Caco-2 (cell line): ENCODE measurements at regions of chr6 and their contacts with region 1.

Region 1: GRCh38 chr6:134111062-134111677 is 58.7 kb upstream of the SLC2A12 start:
- DNase-seq: peak in 1 of 2 experiments; percentile 58
- H3K4me3 ChIP-seq: no peak overlapping the region
- H3K4me3 Mint-ChIP-seq: no peak overlapping the region
- H3K27ac Mint-ChIP-seq: no peak overlapping the region
- H3K4me1 ChIP-seq: peaks cover under 1% of the 10 kb centered on the region; the same call in 1 of the 2 replicates
- H3K4me1 Mint-ChIP-seq: no peaks in the 10 kb centered on the region
- H3K27me3 ChIP-seq: no peaks in the 10 kb centered on the region
- H3K27me3 Mint-ChIP-seq: peaks cover 3% of the 10 kb centered on the region
- CTCF ChIP-seq: peak; percentile 75 to 80

Region 2: DNA sequence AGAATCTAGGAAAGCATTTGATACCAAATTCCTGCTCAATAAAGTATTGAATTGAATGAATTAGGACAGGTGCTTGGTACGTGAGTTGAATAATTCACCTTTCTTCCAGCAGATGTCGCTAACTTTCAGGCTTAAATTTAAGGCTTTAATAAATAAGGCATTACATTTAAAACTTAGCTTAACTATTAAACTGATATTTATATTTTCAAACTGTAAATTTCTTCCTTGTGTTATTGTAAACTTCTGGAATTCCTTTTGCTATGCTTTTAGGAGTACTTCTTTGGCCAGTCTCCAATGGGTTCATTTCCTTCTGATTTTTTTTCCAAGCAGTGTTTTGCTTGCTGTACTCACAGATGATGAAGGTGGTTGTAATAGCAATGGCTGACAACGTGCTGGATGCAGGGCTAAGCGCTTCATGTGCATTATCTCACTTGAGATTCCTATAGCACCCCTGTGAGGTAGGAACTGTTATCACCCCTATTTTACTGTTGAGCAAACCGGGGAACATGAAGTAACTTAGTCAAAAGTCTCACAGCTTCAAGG is 12.6 kb after region 1 on chr6:
- CTCF ChIA-PET with region 1: interaction called, 4 read pairs
- POLR2A ChIA-PET with region 1: no interaction called
- intact Hi-C with region 1: loop called (anchors 2 kb)
- DNase-seq: peak; percentile 70 to 71
- H3K4me3 ChIP-seq: no peak overlapping the region
- H3K4me3 Mint-ChIP-seq: no peak overlapping the region
- H3K27ac Mint-ChIP-seq: no peak overlapping the region
- H3K4me1 ChIP-seq: no peaks in the 10 kb centered on the region
- H3K4me1 Mint-ChIP-seq: no peaks in the 10 kb centered on the region
- H3K27me3 ChIP-seq: no peaks in the 10 kb centered on the region
- H3K27me3 Mint-ChIP-seq: no peaks in the 10 kb centered on the region
- CTCF ChIP-seq: peak; percentile 54 to 58

Region 3: GRCh38 chr6:134938896-134939295 is 827.7 kb after region 1 on chr6:
- CTCF ChIA-PET with region 1: interaction called, 4 read pairs
- POLR2A ChIA-PET with region 1: no interaction called
- intact Hi-C with region 1: loop called (anchors 2 kb)
- DNase-seq: no peak
- H3K4me3 ChIP-seq: no peak overlapping the region
- H3K4me3 Mint-ChIP-seq: no peak overlapping the region
- H3K27ac Mint-ChIP-seq: no peak overlapping the region
- H3K4me1 ChIP-seq: peaks cover 6% of the 10 kb centered on the region; the same call in 1 of the 2 replicates
- H3K4me1 Mint-ChIP-seq: no peaks in the 10 kb centered on the region
- H3K27me3 ChIP-seq: no peaks in the 10 kb centered on the region
- H3K27me3 Mint-ChIP-seq: no peaks in the 10 kb centered on the region
- CTCF ChIP-seq: no peak